Gastrocnemius medialis (tissue), 4 donors: ENCODE measurements at regions of chr2 and their contacts with region 1.

Region 1: GRCh38 chr2:232611551-232612218 is 21.7 kb upstream of the EFHD1 start:
- DNase-seq: peak; percentile 38 to 60
- ATAC-seq: peak; percentile 23 to 75
- H3K4me3 ChIP-seq: no peak overlapping the region
- H3K27ac ChIP-seq: no peak overlapping the region
- H3K4me1 ChIP-seq: no peaks in the 10 kb centered on the region
- H3K27me3 ChIP-seq: no peaks in the 10 kb centered on the region
- CTCF ChIP-seq: peak; percentile 71 to 83 (median 82)
- POLR2A ChIP-seq: no peak

Region 2: DNA sequence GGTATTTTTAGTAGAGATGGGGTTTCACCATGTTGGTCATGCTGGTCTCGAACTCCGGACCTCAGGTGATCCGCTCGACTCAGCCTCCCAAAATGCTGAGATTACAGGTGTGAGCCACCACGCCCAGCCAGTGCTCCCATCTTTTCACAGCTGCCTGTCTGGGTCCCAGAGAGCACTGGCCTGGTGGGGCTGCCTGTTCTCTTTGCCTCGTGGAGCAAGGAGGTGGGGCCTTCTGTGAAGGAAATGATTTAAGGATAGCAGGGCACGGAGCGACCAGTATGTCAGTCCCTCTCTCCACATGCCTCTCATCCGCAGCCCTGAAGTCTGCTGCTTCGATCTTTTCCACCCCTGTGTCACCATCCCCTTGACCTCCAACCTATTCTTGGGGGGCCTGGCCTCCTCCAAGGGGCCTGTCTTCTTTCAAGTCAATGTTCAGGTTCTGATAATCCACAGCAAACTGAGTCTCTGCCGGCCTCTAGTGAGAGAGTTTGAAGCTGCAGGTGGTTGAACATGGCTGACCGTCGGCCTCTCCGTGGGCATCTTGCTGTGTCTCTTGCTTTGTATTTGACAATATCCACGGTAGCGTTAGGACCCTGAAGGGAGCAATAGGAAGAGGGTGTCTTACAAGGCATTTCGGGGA is 57.2 kb after region 1 on chr2:
- in situ Hi-C with region 1: no loop called
- intact Hi-C with region 1: loop called (anchors 1 kb)
- DNase-seq: no peak
- ATAC-seq: peak; percentile 50 to 62
- H3K4me3 ChIP-seq: no peak overlapping the region
- H3K27ac ChIP-seq: peak overlapping the region in 2 of 4 donors; percentile 77 to 82
- H3K4me1 ChIP-seq: peaks cover 11 to 20% of the 10 kb centered on the region in 2 donors
- H3K27me3 ChIP-seq: no peaks in the 10 kb centered on the region
- CTCF ChIP-seq: peak in 4 of 5 experiments; percentile 32 to 46 (median 44)
- POLR2A ChIP-seq: no peak

Region 3: DNA sequence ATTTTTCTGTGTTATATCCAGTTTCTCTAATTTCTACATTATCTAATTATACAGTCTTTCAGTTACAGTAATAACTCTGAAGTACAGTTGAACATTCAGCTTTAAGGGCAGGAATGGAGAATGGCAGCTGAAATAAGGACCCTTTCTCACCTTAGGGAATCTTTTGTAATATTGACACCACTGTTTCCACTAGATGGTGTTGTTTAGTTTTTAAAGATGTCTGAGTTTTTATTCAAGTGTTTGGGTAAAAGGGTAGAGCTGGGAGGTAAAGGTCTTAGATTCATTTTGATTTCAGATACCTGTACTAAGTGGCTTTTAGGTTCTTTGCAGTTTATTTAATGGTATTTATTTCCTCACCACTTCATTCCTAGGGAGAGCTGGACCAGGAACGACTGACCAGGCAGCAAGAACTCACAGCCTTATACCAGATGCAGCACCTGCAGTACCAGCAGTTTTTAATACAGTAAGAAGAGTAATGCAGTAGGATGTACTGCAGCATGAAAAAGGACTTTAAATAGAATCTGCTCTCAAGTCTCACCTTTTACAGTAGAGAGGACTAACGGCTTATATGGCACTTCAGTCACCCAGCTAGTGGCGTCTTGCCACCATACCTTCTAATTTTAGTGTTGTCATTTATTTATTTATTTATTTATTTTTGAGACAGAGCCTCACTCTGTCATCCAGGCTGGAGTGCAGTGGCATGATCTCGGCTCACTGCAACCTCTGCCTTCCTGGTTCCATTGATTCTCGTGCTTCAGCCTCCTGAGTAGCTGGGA is 197.9 kb after region 1 on chr2:
- in situ Hi-C with region 1: loop called in 1 of 4 experiments (anchors 25 kb)
- intact Hi-C with region 1: no loop called
- DNase-seq: peak; percentile 15 to 60
- ATAC-seq: peak; percentile 88 to 94
- H3K4me3 ChIP-seq: no peak overlapping the region
- H3K27ac ChIP-seq: peak overlapping the region in 3 of 4 donors; percentile 28 to 64 (median 58)
- H3K4me1 ChIP-seq: peaks cover 11 to 15% of the 10 kb centered on the region in 2 donors
- H3K27me3 ChIP-seq: no peaks in the 10 kb centered on the region
- CTCF ChIP-seq: no peak
- POLR2A ChIP-seq: no peak

Region 4: DNA sequence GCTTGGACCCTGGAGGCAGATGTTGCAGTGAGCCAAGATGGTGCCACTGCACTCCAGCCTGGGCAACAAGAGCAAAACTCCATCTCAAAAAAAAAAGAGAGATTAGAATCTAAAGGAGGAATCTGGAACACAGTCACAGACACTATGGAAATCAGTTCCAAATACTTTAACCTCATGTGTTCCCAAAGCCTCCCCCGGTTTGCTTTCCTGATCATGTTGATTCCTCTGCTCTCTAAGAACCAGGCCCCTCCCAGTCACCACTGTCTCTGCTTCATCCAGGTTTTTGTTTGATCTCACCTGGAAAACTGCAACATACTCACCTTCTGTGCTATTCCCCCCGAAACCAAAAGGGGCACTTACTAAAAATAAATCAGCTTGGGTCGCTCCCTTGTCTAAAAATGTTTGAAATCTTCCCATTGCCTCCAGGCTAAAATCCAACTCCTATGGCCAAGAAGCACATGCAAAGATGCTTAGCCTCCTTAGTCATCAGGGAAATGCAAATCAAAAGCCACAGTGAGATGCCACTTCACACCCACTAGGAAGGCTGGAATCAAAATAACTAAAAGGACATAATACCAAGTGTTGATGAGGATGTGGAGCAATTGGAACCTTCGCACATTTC is 414.6 kb after region 1 on chr2:
- in situ Hi-C with region 1: loop called in 1 of 4 experiments (anchors 25 kb)
- intact Hi-C with region 1: no loop called
- DNase-seq: no peak
- ATAC-seq: no peak
- H3K4me3 ChIP-seq: no peak overlapping the region
- H3K27ac ChIP-seq: no peak overlapping the region
- H3K4me1 ChIP-seq: no peaks in the 10 kb centered on the region
- H3K27me3 ChIP-seq: no peaks in the 10 kb centered on the region
- CTCF ChIP-seq: no peak
- POLR2A ChIP-seq: no peak

Region 5: GRCh38 chr2:233251306-233252116 is 639.8 kb after region 1 on chr2 and contains the start of gene ATG16L1:
- in situ Hi-C with region 1: loop called (anchors 10 kb)
- intact Hi-C with region 1: loop called (anchors 1 kb)
- DNase-seq: peak; percentile 91 to 93
- ATAC-seq: peak; percentile 97 to 98
- H3K4me3 ChIP-seq: peak within 1 kb of the TSS; percentile 89 to 99 (median 97)
- H3K27ac ChIP-seq: peak within 1 kb of the TSS; percentile 79 to 96 (median 94)
- H3K4me1 ChIP-seq: peaks cover 15 to 26% of the 10 kb centered on the region in 2 donors
- H3K27me3 ChIP-seq: no peaks in the 10 kb centered on the region
- CTCF ChIP-seq: peak; percentile 85 to 95 (median 87)
- POLR2A ChIP-seq: peak; percentile 49 to 74
- total RNA-seq, gene ATG16L1: 20.8 to 36.1 (median 35.9) TPM

Region 6: DNA sequence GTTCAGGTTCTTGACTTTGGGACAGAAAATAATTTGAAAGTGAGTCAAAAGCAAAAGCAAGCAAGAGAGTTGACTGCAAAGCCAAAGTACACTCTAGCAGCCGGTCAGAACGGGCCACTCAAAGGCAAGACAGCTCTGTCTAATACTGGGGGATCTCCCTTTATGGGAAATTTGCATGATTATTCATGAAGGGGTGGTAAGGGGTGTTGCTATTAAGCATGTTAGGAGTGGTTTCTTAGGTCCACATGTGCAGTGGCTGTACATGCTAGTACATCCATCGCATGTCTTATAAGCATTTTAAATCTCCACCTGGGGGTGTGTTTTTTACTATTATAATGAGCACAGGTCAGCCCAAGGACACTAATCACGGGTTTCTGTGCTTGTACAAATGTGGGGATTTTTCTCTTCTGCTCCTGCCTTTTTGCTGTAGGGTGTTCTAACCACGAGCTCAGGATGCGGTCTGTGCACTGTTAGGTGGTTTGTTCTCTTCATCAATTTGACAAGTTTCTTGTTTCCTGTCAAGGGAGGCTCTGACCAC is 1378.6 kb after region 1 on chr2:
- in situ Hi-C with region 1: no loop called
- intact Hi-C with region 1: no loop called
- DNase-seq: no peak
- ATAC-seq: no peak
- H3K4me3 ChIP-seq: no peak overlapping the region
- H3K27ac ChIP-seq: no peak overlapping the region
- H3K4me1 ChIP-seq: no peaks in the 10 kb centered on the region
- H3K27me3 ChIP-seq: no peaks in the 10 kb centered on the region
- CTCF ChIP-seq: no peak
- POLR2A ChIP-seq: no peak